Gastrocnemius medialis (tissue), 4 donors: ENCODE measurements at regions of chr9 and their contacts with region 1.

Region 1: DNA sequence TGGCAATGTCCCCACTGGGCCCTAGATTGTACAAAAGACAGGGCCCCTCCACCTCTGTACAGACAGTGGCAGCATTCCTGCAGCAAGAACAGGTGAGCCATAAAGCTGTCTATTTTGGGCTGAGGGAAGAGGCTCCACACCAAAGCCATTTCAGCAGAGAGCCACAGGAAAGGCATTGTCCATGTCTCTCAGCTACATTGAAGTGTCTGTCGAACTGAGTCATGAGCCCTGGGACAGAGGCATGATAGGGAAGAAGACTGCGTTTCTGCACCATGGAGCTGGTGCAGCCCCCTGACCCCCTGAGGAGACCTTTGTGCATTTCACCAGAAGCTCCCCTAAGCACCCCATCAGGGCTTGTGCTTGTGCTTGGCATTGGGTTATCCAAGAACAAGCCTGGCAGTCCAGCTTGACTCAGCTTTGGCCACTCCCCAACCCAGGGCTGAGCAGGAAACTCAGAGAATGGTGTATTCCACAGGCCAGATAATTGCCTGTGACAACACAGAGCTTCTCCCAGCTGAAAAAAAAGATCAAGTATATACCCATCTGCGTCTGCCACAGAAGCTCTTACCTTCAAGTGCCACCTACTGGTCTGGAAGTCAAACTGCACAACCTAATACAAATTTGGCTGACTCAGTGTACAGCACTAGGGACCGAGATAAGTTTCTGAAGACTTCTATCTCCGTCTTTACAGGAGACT is 5.9 kb upstream of the FRMD3 start:
- DNase-seq: peak in 1 of 2 donors; percentile 21
- ATAC-seq: peak; percentile 80 to 89
- H3K4me3 ChIP-seq: no peak overlapping the region
- H3K27ac ChIP-seq: no peak overlapping the region
- H3K4me1 ChIP-seq: peaks cover under 1% of the 10 kb centered on the region in 2 donors
- H3K27me3 ChIP-seq: no peaks in the 10 kb centered on the region
- CTCF ChIP-seq: peak; percentile 61 to 79 (median 73)
- POLR2A ChIP-seq: no peak

Region 2: GRCh38 chr9:83199243-83199642 is 344.9 kb before region 1 on chr9:
- in situ Hi-C with region 1: loop called in 3 of 4 experiments (anchors 10 to 25 kb)
- intact Hi-C with region 1: loop called (anchors 2 kb)
- DNase-seq: peak in 1 of 2 donors; percentile 21
- ATAC-seq: peak; percentile 89 to 90
- H3K4me3 ChIP-seq: no peak overlapping the region
- H3K27ac ChIP-seq: no peak overlapping the region
- H3K4me1 ChIP-seq: no peaks in the 10 kb centered on the region
- H3K27me3 ChIP-seq: peaks cover 0 to 3% (median 0%) of the 10 kb centered on the region in 3 donors
- CTCF ChIP-seq: peak; percentile 35 to 69 (median 60)
- POLR2A ChIP-seq: no peak

Region 3: GRCh38 chr9:83219152-83219923 is 324.8 kb before region 1 on chr9:
- in situ Hi-C with region 1: loop called in 2 of 4 experiments (anchors 25 kb)
- intact Hi-C with region 1: loop called (anchors 5 kb)
- DNase-seq: peak; percentile 59 to 67
- ATAC-seq: peak; percentile 96 to 99
- H3K4me3 ChIP-seq: peak overlapping the region; percentile 61 to 62 (median 62)
- H3K27ac ChIP-seq: peak overlapping the region; percentile 45 to 63 (median 57)
- H3K4me1 ChIP-seq: peaks cover 5 to 11% of the 10 kb centered on the region in 2 donors
- H3K27me3 ChIP-seq: no peaks in the 10 kb centered on the region
- CTCF ChIP-seq: peak in 3 of 5 experiments; percentile 19 to 71 (median 49)
- POLR2A ChIP-seq: no peak

Region 4: GRCh38 chr9:83342761-83343160 is 201.4 kb before region 1 on chr9:
- in situ Hi-C with region 1: loop called (anchors 5 to 10 kb)
- intact Hi-C with region 1: no loop called
- DNase-seq: no peak
- ATAC-seq: no peak
- H3K4me3 ChIP-seq: no peak overlapping the region
- H3K27ac ChIP-seq: no peak overlapping the region
- H3K4me1 ChIP-seq: peaks cover 0 to 2% of the 10 kb centered on the region in 2 donors
- H3K27me3 ChIP-seq: no peaks in the 10 kb centered on the region
- CTCF ChIP-seq: no peak
- POLR2A ChIP-seq: no peak